AG04449 (cell line): ENCODE measurements at regions of chr11 and their contacts with region 1.

Region 1: DNA sequence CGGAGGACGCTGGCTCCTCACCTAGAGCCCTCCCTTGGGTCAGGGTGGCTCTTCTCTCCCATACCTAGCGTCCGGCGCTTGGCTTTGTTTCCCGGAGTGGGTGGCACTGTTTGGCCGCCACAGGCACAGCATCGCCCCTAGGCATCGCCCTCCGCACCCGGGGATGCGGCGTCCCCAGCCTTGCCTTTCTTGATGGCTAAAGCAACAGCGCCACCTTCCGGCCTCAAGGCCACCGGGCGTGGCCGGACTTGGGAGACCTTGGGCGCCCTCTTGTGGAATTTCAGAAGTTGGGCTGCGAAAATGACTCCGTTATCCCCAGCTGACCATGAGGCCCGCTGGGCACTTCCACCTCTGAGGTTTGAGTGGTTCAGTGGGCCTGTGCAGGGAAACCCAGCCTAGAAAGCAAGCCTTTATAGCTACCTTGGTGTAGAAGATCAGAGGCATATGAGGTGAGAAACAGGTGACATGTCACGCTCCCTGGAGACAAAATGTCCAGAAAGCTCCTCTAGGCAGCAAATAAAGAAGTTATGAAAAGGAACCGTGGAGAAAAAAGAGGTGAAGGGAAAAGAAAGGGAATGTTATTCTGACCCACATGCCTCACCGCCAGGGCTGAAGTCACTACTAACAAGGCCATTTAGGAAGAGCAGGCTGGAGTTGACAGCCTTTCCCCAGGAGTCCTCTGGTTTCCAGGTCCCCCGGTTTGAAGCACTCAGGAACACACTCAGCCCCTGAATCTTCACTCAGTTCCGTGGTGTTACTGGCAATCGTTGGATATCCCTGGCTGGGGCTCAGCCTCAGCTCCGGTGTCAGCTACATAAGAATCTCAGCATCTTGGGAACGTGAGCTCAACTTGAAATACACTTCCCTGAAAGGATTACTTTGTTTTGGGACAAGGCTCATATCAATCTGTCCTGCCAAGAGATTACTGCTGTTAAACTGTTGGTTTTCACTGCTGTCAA is 54.1 kb downstream of the SNX19 start:
- DNase-seq: peak; percentile 65
- H3K4me3 ChIP-seq: no peak overlapping the region
- CTCF ChIP-seq: peak; percentile 100

Region 2: GRCh38 chr11:130426837-130427341 is 435.3 kb before region 1 on chr11:
- CTCF ChIA-PET with region 1: interaction called, 1,136 read pairs
- POLR2A ChIA-PET with region 1: interaction called, 3 read pairs
- DNase-seq: no peak
- H3K4me3 ChIP-seq: no peak overlapping the region
- CTCF ChIP-seq: no peak

Region 3: DNA sequence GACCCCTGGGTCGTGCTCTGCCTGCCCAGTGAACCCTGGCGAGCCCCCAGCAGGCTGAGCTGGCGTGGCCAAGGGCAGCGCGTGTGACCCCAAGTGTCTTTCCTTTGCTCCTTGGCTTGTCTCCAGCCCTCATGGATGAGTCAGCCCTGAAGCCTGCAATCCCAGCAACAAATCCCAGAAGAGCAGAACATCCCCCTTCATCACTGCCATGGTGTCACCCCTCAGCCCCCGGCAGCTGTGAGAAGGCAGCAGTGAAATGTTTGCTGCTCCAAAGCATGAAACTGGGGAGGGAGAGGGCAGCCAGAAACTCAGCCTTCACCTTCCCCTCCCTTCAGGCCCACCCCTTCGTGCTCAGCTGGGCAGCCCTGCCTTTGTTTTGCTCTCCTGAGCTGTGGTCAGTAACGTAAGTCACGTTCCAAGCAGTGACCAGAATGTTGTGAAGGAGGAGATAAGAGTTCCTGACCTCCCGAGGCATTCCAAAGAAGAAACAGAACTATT is 383.9 kb before region 1 on chr11:
- CTCF ChIA-PET with region 1: interaction called, 12 read pairs
- POLR2A ChIA-PET with region 1: no interaction called
- DNase-seq: peak; percentile 54
- H3K4me3 ChIP-seq: no peak overlapping the region
- CTCF ChIP-seq: no peak

Region 4: DNA sequence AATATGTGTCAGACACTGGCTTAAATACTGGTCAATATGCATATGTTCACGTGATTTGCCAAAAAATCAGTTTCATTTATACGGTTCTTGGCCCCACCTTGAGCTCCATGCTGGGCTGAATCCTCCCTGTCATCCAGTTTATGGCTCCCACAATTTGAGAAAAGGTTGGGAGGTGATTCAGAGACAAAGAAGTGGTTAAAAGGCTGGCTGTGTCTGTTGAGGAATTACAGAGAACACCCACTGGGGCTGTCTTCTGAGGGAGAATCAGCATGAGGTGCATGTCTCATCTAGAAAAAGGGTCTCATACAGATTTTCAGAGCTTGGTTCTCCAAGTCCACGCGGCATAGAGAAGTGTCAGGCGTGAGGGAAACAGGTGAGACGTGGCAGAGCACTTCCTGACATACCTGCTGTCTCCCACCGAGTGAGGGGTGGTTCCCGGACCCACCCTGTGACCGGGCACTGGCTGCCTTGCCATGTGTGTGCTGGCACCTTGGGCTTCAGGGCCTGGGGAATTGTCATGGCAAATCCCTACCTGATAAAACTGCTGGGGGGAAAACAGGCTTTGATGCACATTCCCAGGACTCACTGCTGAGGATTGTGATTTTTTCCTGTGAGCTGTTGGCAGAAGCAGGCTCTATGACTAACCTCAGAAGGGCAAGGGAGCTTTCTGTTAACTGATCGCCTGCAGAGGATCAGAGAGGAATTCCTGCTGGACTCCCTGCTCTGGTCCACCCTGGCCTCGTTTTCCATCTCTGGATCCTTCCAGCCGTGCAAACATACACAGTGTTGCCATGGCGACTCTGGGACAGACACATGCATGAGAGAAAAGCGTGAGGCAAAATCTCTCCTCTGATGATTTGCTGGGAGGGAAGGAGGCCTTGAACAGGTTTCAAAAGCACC is 190.1 kb before region 1 on chr11:
- CTCF ChIA-PET with region 1: interaction called, 16 read pairs
- POLR2A ChIA-PET with region 1: no interaction called
- DNase-seq: peak; percentile 77
- H3K4me3 ChIP-seq: no peak overlapping the region
- CTCF ChIP-seq: no peak

Region 5: DNA sequence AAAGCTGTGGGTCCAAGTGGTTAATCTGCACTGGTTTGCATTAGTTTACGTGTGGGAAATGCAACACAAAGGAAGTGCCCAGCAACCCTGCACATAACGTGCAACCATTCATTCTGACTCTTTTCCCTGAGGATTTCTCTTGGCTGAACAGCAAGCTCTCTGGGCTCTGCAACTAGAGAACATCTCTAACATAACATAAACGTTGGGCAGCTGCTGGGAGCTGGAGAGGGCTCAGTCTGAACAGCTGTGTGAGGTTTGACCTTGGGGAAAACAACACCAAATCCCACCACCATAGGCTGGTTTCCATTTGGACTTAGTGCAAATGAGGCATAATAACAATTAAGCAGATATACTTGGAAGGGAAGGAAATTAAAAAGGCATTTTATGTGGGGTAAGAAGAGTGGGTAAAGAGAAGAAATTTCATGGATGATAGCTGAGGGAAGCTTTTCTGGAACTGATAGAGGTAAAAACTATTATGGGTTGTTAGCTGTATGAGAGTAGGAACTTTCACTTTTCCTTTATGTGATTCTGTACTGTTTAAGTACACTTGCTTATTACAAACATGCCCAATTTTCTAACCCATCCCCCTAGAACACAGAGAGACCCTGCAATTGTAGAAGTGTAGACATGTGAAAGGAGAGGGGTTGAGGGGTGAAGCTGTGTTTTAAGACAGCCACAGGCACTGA is 22.1 kb before region 1 on chr11:
- CTCF ChIA-PET with region 1: interaction called, 85 read pairs
- POLR2A ChIA-PET with region 1: no interaction called
- DNase-seq: no peak
- H3K4me3 ChIP-seq: no peak overlapping the region
- CTCF ChIP-seq: no peak

Region 6: GRCh38 chr11:130894322-130895025 is 32.3 kb after region 1 on chr11:
- CTCF ChIA-PET with region 1: interaction called, 290 read pairs
- POLR2A ChIA-PET with region 1: no interaction called
- DNase-seq: no peak
- H3K4me3 ChIP-seq: no peak overlapping the region
- CTCF ChIP-seq: peak; percentile 85